CD4-positive, alpha-beta memory T cell (primary cell): ENCODE measurements at regions of chr18 and their contacts with region 1.

Region 1: DNA sequence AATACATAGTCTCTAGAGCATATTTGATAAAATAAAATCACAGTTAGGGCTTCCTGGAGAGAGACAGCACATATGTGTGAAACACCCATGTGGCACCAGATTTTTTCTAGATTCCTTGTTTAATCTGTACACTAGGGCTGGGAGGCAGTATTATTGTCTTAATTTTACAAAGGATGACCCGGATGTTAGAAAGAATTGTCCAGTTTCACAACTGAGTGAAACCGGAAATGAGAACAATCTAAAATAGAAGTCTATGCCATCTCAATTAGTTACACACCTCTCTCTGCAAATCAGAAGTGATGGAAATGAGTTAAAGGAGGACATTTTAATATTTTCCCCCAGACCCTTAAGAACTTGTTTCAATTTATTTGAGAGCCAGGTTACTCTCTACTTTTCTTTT is 463.7 kb upstream of the DSEL start:
- DNase-seq: no peak
- H3K4me3 ChIP-seq: no peak overlapping the region
- H3K4me3 Mint-ChIP-seq: no peak overlapping the region
- H3K27ac ChIP-seq: no peak overlapping the region
- H3K27ac Mint-ChIP-seq: no peak overlapping the region
- H3K4me1 ChIP-seq: no peaks in the 10 kb centered on the region
- H3K4me1 Mint-ChIP-seq: no peaks in the 10 kb centered on the region
- H3K27me3 ChIP-seq: no peaks in the 10 kb centered on the region
- H3K27me3 Mint-ChIP-seq: no peaks in the 10 kb centered on the region

Region 2: GRCh38 chr18:67926929-67927864 is 53.0 kb before region 1 on chr18:
- CTCF ChIA-PET with region 1: no interaction called
- POLR2A ChIA-PET with region 1: no interaction called
- intact Hi-C with region 1: loop called (anchors 10 kb)
- DNase-seq: no peak
- H3K4me3 ChIP-seq: no peak overlapping the region
- H3K4me3 Mint-ChIP-seq: no peak overlapping the region
- H3K27ac ChIP-seq: no peak overlapping the region
- H3K27ac Mint-ChIP-seq: no peak overlapping the region
- H3K4me1 ChIP-seq: no peaks in the 10 kb centered on the region
- H3K4me1 Mint-ChIP-seq: no peaks in the 10 kb centered on the region
- H3K27me3 ChIP-seq: no peaks in the 10 kb centered on the region
- H3K27me3 Mint-ChIP-seq: no peaks in the 10 kb centered on the region

Region 3: DNA sequence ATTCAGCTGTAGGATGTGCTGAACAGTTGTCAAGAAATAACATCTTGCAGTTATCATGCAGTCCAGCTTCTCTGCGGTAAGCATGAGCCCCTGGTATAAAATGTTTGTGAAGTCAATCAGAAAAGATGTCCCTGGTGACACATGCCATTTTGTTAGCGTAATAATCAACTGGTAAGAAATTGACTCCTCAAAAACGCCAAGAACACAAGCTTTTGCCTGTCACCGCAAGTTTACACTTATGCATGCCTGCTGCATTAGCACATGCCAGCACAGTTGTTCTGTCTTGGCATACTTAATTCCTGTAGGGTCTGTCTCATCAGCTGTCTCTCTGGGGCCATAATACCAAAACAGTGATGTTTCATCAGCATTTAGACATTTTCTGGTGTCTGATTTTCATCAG is 61.1 kb after region 1 on chr18:
- CTCF ChIA-PET with region 1: no interaction called
- POLR2A ChIA-PET with region 1: no interaction called
- intact Hi-C with region 1: no loop called
- DNase-seq: no peak
- H3K4me3 ChIP-seq: no peak overlapping the region
- H3K4me3 Mint-ChIP-seq: no peak overlapping the region
- H3K27ac ChIP-seq: no peak overlapping the region
- H3K27ac Mint-ChIP-seq: no peak overlapping the region
- H3K4me1 ChIP-seq: no peaks in the 10 kb centered on the region
- H3K4me1 Mint-ChIP-seq: no peaks in the 10 kb centered on the region
- H3K27me3 ChIP-seq: no peaks in the 10 kb centered on the region
- H3K27me3 Mint-ChIP-seq: no peaks in the 10 kb centered on the region